Natural killer cell (primary cell): ENCODE measurements at regions of chr14 and their contacts with region 1.

Region 1: DNA sequence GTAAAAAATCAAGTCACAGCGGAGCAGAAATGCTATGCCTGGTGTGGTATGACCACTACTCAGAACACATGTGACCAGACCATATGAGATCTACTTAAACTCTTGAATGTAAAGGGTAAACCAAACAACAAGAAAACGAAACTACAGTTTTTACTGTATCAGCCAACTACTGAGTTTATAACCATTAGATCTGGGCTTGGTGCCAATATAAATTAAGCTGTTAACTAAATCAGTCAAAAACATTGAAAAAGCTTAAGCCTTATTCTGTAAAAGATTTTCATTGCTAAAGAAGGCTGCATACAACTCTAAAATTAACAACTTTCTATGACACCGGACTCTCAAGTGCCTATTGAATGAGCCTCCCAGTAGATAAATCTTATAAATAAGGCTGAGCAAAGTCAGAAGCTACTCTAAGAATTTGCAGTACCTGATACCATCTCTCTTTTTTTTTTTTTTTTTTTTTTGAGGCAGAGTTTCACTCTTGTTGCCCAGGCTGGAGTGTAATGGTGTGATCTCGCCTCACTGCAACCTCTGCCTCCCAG is 35.4 kb downstream of the SPTLC2 start:
- DNase-seq: peak in 1 of 2 donors; percentile 66
- ATAC-seq: peak; percentile 79 to 82 (median 82)
- H3K4me3 ChIP-seq: no peak overlapping the region
- H3K4me3 Mint-ChIP-seq: peak overlapping the region; percentile 75
- H3K27ac ChIP-seq: peak overlapping the region; percentile 63
- H3K27ac Mint-ChIP-seq: peak overlapping the region; percentile 87 to 93
- H3K4me1 ChIP-seq: peaks cover 15% of the 10 kb centered on the region
- H3K4me1 Mint-ChIP-seq: peaks cover 26 to 27% of the 10 kb centered on the region in 2 donors
- H3K27me3 ChIP-seq: no peaks in the 10 kb centered on the region
- H3K27me3 Mint-ChIP-seq: no peaks in the 10 kb centered on the region
- CTCF ChIP-seq: no peak

Region 2: DNA sequence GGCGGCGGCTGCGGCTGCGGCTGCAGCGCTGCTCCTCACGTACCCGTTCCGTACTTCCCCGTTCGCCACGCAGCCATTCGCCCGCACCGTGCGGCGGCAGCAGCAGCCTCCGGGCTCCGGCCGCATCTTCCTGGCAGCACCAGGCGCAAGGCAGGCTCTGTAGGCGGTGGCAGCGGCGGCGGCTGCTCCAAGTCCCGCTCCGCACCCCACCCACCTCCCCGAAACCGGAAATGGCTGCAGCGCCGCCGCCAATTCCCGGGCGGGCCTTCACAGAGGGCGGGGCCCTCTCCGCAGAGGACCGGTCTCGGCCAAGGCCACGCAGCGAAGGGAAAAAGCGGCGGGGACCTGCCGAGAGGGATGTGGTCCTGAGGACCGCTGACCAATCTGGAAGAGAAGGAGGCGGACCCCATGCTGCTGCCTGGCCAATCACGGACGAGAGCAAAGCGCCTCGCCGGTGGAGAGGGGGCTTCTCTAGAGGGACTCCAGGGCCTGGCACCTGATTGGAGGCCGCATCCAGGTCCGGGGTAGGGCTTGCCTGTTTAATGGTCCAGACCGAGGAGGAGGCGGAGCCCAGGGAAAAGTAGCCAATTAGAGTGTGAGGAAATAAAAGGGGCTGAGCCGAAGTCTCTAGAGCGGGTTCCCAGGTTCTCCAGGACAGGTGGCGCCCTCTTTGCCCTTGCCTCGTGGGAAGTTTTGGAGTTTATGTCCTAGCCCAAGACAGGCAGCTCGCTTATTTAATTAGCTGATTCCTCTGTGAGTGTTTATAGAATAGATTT is 35.6 kb after region 1 on chr14 and contains the start of gene SPTLC2:
- intact Hi-C with region 1: loop called (anchors 5 kb)
- DNase-seq: peak; percentile 94 to 99
- ATAC-seq: peak; percentile 92 to 99 (median 94)
- H3K4me3 ChIP-seq: peak within 1 kb of the TSS; percentile 55
- H3K4me3 Mint-ChIP-seq: peak within 1 kb of the TSS; percentile 92
- H3K27ac ChIP-seq: peak within 1 kb of the TSS; percentile 55
- H3K27ac Mint-ChIP-seq: peak within 1 kb of the TSS; percentile 83 to 92
- H3K4me1 ChIP-seq: peaks cover 15% of the 10 kb centered on the region
- H3K4me1 Mint-ChIP-seq: peaks cover 32 to 48% of the 10 kb centered on the region in 2 donors
- H3K27me3 ChIP-seq: no peaks in the 10 kb centered on the region
- H3K27me3 Mint-ChIP-seq: no peaks in the 10 kb centered on the region
- CTCF ChIP-seq: no peak
- total RNA-seq, gene SPTLC2: 35.2 to 58.6 (median 50.4) TPM